ENCODE measurements at regions of chrX and their contacts with region 1.

Region 1: GRCh38 chrX:77910108-77910840 is at the start of gene ATP7A:
- DNase-seq: peak; percentile 84 to 94 (median 91)
- H3K4me3 ChIP-seq: peak within 1 kb of the TSS; percentile 7 to 64 (median 26)
- H3K27ac ChIP-seq: peak within 1 kb of the TSS in 4 of 5 donors; percentile 66 to 80 (median 74)
- H3K4me1 ChIP-seq: no peaks in the 10 kb centered on the region
- H3K27me3 ChIP-seq: no peaks in the 10 kb centered on the region
- CTCF ChIP-seq: peak; percentile 31 to 74 (median 56)
- POLR2A ChIP-seq: peak in 1 of 2 donors; percentile 58
- total RNA-seq, gene ATP7A: 7.7 to 20.9 (median 14.8) TPM

Region 2: DNA sequence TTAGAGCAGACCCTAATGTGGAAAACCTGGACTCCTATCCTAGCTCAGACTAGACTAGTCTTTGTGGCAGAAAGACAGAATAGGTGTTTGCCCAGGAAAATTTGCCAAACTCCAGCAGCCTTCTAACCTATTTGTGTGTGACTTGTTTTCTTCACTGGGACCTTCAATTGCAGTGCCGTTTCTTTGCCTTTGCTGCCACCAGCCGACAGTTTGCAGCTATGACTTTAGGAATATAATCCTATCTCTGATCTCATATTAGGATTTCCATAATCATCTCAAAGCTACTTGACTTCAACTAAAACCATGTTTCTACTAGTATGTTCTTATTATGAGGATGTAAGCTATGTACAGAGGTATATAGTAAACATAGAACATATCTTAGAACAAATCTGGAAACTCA is 119.4 kb after region 1 on chrX:
- intact Hi-C with region 1: loop called in 1 of 2 experiments (anchors 10 kb)
- DNase-seq: peak; percentile 17 to 63 (median 38)
- H3K4me3 ChIP-seq: no peak overlapping the region
- H3K27ac ChIP-seq: no peak overlapping the region
- H3K4me1 ChIP-seq: no peaks in the 10 kb centered on the region
- H3K27me3 ChIP-seq: no peaks in the 10 kb centered on the region
- CTCF ChIP-seq: peak; percentile 31 to 63 (median 55)
- POLR2A ChIP-seq: no peak